Right ventricle myocardium inferior (tissue), 1 donor: ENCODE measurements at regions of chr1 and their contacts with region 1.

Region 1: GRCh38 chr1:174022080-174022975 is at the start of gene RC3H1:
- DNase-seq: peak; percentile 97
- ATAC-seq: peak; percentile 98
- total RNA-seq, gene RC3H1: 20.2 TPM

Region 2: DNA sequence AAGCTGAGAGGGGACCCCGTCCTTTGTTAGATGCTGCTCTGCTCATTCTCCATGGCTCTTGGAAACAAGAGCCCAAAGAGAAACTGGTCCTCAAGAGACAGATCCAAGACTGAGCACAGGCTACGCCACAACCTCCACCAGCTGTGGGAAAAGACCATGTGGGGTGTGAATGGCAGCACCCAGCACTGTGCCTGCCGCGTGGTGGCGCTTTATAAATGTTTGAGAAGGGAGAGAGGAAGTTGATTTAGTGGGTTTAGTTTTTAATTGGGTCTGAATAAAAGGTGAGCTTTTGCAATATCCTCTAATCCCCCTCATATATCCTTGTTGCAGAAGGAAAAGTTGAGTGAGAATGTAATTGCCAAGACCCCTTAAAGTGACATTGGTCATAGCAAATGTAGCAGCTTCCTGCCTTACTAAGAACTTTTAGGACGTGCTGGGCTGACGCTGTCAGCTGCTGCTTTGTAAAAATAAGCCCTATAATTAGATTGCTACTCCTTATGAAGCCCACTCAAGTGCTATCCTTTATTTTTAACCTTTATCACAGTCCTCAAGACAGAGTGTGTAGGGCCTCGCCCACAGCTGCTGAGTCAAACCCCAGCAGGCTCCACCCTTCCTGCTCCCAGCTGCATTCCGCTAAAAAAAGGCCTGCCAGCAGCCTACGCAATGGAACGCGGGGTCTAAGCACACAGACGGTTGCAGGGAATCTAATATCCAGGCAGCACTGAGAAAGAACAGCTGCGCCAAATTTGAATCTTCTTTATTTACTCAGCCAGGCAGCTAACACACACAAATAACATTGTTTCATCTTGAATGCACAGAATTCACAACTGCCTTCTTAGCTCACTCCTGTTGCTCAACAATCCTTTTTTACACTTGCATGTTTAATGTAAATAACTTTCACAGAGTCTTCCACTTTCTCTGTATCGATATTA is 592.6 kb before region 1 on chr1:
- intact Hi-C with region 1: no loop called
- DNase-seq: peak; percentile 92
- ATAC-seq: peak; percentile 98

Region 3: DNA sequence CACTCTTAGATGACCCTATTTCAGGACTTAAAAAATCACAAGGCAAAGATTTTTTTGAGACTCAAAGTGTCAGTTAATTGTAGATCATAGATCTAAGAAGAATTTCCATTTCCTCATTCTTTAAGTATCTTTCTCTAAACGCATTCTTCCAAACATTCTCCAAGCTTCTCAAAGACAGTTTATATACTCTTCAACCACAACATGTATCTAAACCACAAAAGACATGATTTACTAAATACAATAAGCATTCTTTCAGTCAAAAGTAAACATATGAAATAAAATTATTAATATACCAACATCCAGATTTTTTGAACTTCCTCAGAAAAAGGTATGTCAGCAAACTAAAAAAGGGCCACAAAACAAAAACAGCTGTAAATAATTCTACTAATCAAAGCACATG is 24.5 kb before region 1 on chr1:
- intact Hi-C with region 1: loop called (anchors 2 kb)
- DNase-seq: no peak
- ATAC-seq: no peak

Region 4: DNA sequence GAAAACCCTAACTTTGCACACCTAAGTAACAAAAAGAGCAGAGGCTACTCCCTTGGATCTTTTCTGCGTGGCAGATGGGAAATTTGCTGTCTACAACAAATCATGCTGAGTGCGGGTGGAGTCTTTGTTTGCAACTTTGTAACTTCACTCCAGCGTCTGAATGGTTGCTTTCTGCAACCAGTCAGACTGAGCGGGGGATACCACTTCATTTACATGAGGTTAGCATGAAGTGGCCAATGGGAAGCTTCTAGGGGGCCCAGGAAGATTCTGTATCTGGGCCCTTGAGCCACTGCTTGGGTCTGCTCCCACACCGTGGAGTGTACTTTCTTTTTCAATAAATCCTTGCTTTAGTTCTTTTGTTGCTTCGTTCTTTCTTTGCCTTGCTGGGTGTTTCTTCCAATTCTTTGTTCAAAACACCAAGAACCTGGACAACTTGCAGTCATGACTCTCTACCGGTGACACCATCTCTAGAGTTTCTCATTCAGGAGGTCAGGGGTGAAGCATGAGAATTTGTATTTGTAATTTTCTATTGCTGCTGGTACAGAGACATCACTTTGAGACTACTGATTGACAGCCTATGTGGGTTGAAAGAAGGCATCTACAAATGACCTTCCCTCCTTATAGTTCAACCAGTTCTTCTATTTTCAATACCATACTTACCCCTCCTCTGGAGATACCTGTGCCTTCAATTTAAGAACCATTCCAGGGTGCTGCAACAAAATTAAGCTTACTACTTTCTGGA is 55.6 kb after region 1 on chr1:
- intact Hi-C with region 1: no loop called
- DNase-seq: no peak
- ATAC-seq: no peak

Region 5: DNA sequence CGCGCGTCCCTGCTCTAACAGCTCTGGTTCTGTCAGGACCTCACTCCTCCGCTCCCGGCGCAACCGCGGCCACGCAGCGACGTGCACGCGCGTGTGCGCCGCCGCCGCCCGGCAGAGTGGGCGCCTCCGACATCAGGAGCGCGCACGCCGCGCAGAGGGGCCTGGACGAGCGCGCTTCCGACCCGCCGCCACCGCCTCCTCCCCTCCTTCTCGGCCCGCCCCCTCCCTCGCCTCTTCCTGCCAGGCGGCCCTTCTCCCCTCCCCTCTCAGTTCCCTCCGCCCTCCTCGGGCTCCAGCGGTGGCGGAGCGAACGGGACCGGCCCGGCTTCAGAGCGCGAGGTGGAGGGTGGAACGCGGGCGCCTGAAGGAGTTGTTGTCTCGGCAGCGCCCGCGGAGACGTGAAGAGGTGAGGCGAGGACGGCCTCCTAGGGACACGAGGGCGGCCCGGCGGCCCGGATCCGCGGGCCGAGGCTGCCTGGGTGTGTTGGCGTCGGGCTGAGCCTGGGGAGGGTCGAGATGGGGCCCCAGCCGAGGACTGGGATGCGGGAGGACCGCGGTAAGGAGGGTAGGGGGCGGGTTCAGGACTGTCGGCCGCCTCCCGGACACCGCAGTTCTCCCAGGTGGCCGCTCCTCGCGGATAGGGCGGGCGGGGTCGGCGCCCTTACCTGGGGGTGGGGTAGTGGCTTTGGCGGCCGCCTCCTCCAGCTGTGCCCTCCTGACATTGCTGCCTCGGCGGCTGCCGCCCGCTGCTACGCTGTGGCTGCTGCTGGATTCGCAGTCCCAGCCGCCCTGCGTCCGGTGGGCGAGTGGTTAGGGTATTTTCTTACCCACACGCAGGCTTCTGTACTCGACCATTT is 137.2 kb after region 1 on chr1 and contains the start of gene RABGAP1L:
- intact Hi-C with region 1: loop called (anchors 5 kb)
- DNase-seq: peak; percentile 97
- ATAC-seq: peak; percentile 99
- total RNA-seq, gene RABGAP1L: 61.4 TPM